Heart left ventricle (tissue), 16 donors: ENCODE measurements at regions of chr4 and their contacts with region 1.

Region 1: GRCh38 chr4:39697740-39698423 is at the start of gene UBE2K:
- DNase-seq: peak; percentile 90 to 96 (median 93)
- ATAC-seq: peak; percentile 91 to 99 (median 98)
- H3K4me3 ChIP-seq: peak within 1 kb of the TSS; percentile 63 to 98 (median 85)
- H3K27ac ChIP-seq: peak within 1 kb of the TSS; percentile 83 to 98 (median 92)
- H3K4me1 ChIP-seq: peaks cover 0 to 39% (median 30%) of the 10 kb centered on the region in 12 donors
- H3K27me3 ChIP-seq: no peaks in the 10 kb centered on the region
- CTCF ChIP-seq: peak in 1 of 12 donors; percentile 25
- POLR2A ChIP-seq: peak in 1 of 2 donors; percentile 75
- total RNA-seq, gene UBE2K: 17.9 to 66.9 (median 53.2) TPM

Region 2: DNA sequence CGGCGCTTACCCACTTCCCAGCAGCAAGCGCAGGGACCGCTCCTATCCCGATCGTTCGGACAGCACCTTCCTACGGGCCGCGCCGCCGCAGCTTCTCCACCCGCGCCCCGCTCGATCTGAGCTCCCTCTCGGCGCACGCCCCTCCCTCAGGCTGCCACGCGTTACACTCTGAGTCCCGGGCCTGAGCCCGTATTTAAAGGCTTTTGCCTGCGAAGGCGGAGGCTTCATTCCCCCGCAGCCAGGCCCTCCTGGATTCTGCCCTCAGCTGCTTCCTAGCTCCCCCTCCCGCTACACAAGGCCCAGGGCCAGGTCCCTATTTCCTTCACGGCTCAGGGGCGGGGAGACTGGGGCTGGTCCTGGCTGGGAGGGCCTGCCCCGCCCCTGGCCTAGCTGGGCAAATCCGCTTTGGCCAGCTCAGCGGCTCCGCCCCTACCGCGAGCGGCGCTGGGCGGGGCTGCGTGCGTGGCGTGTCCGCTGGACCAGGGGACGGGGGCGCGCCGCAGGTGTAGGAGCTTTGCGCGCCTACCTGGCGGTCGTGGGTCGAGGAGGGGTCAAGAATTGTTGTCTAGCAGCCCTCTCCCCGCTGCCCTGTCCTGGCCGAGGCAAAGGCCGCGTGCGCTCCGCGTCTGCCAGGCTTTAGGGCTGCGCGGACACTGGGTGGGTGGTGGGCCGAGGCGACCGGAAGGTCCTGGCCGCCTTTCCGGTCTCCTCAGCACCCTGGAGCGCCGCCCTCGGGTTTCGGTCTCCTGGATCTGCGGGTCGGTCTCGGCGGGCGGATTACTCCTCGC is 170.4 kb before region 1 on chr4 and contains the start of gene UGDH:
- intact Hi-C with region 1: loop called in 4 of 10 experiments (anchors 2 to 5 kb)
- DNase-seq: peak; percentile 96 to 99 (median 98)
- ATAC-seq: peak; percentile 98 to 99 (median 99)
- H3K4me3 ChIP-seq: peak within 1 kb of the TSS; percentile 54 to 97 (median 76)
- H3K27ac ChIP-seq: peak within 1 kb of the TSS; percentile 87 to 97 (median 95)
- H3K4me1 ChIP-seq: peaks cover 0 to 30% (median 17%) of the 10 kb centered on the region in 12 donors
- H3K27me3 ChIP-seq: no peaks in the 10 kb centered on the region
- CTCF ChIP-seq: peak in 4 of 12 donors; percentile 4 to 41 (median 28)
- POLR2A ChIP-seq: peak; percentile 62 to 94
- total RNA-seq, gene UGDH: 7.3 to 28.6 (median 16.5) TPM

Region 3: DNA sequence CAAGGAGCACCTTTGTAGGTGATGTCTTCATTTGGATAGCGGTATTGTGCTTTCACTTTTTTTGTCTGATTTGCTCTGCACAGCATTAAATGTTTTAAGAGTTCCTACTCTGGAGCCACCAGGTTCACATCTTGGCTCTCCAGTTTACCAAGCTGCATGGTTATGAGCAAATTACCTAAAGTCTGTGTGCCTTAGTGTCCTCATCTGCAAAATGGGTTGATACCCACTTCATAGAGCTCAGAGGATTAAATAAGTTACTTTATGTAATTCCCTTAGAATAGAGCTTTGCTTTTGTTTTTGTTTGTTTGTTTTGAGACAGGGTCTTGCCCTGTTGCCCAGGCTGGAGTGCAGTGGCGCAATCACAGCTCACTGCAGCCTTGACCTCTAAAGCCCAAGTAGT is 58.3 kb after region 1 on chr4:
- intact Hi-C with region 1: loop called in 1 of 10 experiments (anchors 5 kb)
- DNase-seq: no peak
- ATAC-seq: no peak
- H3K4me3 ChIP-seq: no peak overlapping the region
- H3K27ac ChIP-seq: no peak overlapping the region
- H3K4me1 ChIP-seq: peaks cover 0 to 13% (median 0%) of the 10 kb centered on the region in 12 donors
- H3K27me3 ChIP-seq: no peaks in the 10 kb centered on the region
- CTCF ChIP-seq: no peak
- POLR2A ChIP-seq: no peak

Region 4: DNA sequence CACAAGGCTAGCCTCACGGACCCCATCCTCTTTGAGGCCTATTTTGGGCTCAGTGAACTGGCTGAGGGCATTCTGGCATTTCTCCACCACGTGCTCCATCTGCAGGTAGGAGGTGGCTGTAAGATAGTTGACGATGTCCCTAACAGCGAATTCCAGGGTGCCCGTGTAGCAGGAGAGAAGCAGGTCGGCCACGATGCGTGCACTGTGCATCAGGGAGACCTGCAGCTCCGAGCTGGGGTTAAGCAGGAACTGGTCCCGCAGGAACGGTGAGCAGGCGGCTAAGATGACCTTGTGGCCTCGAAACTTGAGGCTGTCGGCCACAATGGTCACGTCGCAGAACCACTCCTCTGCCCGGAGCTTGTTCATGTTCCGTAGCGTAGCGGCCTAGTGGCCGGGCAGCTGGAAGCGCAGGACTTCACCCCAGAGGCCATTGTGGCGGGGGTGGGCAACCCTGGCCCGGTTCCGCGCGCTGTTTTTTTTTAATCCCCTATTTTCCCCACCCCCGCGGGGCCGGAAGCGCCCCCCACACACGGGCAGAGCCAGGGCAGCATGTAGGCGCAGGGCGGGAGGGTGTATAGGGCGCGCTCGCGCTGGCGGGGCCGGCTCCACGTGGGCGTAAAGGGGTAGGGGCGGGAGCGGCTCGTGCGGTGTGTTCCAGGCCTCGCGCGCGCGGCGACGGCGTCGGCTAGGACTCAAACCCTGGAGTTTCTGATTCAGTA is 73.3 kb after region 1 on chr4:
- intact Hi-C with region 1: no loop called
- DNase-seq: no peak
- ATAC-seq: peak in 1 of 4 donors; percentile 47
- H3K4me3 ChIP-seq: no peak overlapping the region
- H3K27ac ChIP-seq: no peak overlapping the region
- H3K4me1 ChIP-seq: peaks cover 0 to 6% (median 0%) of the 10 kb centered on the region in 12 donors
- H3K27me3 ChIP-seq: no peaks in the 10 kb centered on the region
- CTCF ChIP-seq: no peak
- POLR2A ChIP-seq: no peak

Region 5: GRCh38 chr4:39846120-39846519 is 148.2 kb after region 1 on chr4:
- intact Hi-C with region 1: loop called in 1 of 10 experiments (anchors 10 kb)
- DNase-seq: no peak
- ATAC-seq: no peak
- H3K4me3 ChIP-seq: no peak overlapping the region
- H3K27ac ChIP-seq: no peak overlapping the region
- H3K4me1 ChIP-seq: no peaks in the 10 kb centered on the region
- H3K27me3 ChIP-seq: no peaks in the 10 kb centered on the region
- CTCF ChIP-seq: no peak
- POLR2A ChIP-seq: no peak

Region 6: GRCh38 chr4:39977489-39978377 is 279.9 kb after region 1 on chr4 and contains the start of gene PDS5A:
- intact Hi-C with region 1: loop called (anchors 1 to 5 kb)
- DNase-seq: peak; percentile 89 to 95 (median 91)
- ATAC-seq: peak; percentile 81 to 94 (median 92)
- H3K4me3 ChIP-seq: peak within 1 kb of the TSS; percentile 69 to 100 (median 91)
- H3K27ac ChIP-seq: peak within 1 kb of the TSS; percentile 83 to 97 (median 92)
- H3K4me1 ChIP-seq: peaks cover 0 to 36% (median 15%) of the 10 kb centered on the region in 12 donors
- H3K27me3 ChIP-seq: no peaks in the 10 kb centered on the region
- CTCF ChIP-seq: peak; percentile 68 to 91 (median 87)
- POLR2A ChIP-seq: no peak
- total RNA-seq, gene PDS5A: 23.0 to 41.6 (median 30.7) TPM